ENCODE measurements at regions of chr16 and their contacts with region 1.

Region 1: GRCh38 chr16:4538350-4539235 is at the start of gene CDIP1:
- DNase-seq: peak; percentile 84 to 96 (median 90)
- H3K4me3 ChIP-seq: peak within 1 kb of the TSS; percentile 75
- H3K4me3 Mint-ChIP-seq: peak within 1 kb of the TSS; percentile 79 to 93 (median 85)
- H3K27ac ChIP-seq: peak within 1 kb of the TSS; percentile 80
- H3K27ac Mint-ChIP-seq: peak within 1 kb of the TSS in 7 of 8 donors; percentile 90 to 97 (median 91)
- H3K4me1 ChIP-seq: peaks cover 33% of the 10 kb centered on the region
- H3K4me1 Mint-ChIP-seq: peaks cover 29 to 39% (median 33%) of the 10 kb centered on the region in 3 donors
- H3K27me3 ChIP-seq: no peaks in the 10 kb centered on the region
- H3K27me3 Mint-ChIP-seq: no peaks in the 10 kb centered on the region
- total RNA-seq, gene CDIP1: 28.4 to 32.1 TPM

Region 2: DNA sequence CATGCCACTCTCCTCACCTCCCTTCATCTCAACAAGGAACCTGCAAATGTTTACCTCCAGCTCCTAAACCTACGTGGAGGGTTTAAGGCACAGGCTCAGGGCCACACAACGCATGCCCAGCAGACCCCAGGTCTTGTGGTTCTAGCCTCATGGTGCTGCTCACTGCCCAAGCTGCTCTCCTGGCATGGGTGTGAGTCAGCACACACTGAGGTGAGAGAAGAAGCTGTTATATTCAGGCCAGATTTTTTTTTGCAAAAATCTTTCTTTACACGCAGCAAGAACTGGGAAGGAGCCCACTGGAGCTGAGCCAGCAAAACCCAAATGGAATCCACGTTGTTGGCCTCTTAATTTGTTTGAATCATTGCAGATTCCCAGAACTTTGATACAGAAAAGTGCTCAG is 12.0 kb after region 1 on chr16:
- CTCF ChIA-PET with region 1: interaction called, 9 read pairs
- POLR2A ChIA-PET with region 1: interaction called, 15 read pairs
- DNase-seq: no peak
- H3K4me3 ChIP-seq: no peak overlapping the region
- H3K4me3 Mint-ChIP-seq: no peak overlapping the region
- H3K27ac ChIP-seq: no peak overlapping the region
- H3K27ac Mint-ChIP-seq: no peak overlapping the region
- H3K4me1 ChIP-seq: no peaks in the 10 kb centered on the region
- H3K4me1 Mint-ChIP-seq: peaks cover 2 to 5% (median 4%) of the 10 kb centered on the region in 3 donors
- H3K27me3 ChIP-seq: no peaks in the 10 kb centered on the region
- H3K27me3 Mint-ChIP-seq: peaks cover 0 to 2% of the 10 kb centered on the region in 2 donors

Region 3: GRCh38 chr16:4561596-4561995 is 23.0 kb after region 1 on chr16:
- CTCF ChIA-PET with region 1: no interaction called
- POLR2A ChIA-PET with region 1: no interaction called
- DNase-seq: no peak
- H3K4me3 ChIP-seq: no peak overlapping the region
- H3K4me3 Mint-ChIP-seq: no peak overlapping the region
- H3K27ac ChIP-seq: no peak overlapping the region
- H3K27ac Mint-ChIP-seq: no peak overlapping the region
- H3K4me1 ChIP-seq: no peaks in the 10 kb centered on the region
- H3K4me1 Mint-ChIP-seq: peaks cover 2 to 7% (median 6%) of the 10 kb centered on the region in 3 donors
- H3K27me3 ChIP-seq: no peaks in the 10 kb centered on the region
- H3K27me3 Mint-ChIP-seq: peaks cover 2 to 3% of the 10 kb centered on the region in 2 donors

Measured in CD8-positive, alpha-beta memory T cell (primary cell).